AG04449 (cell line): ENCODE measurements at regions of chr1 and their contacts with region 1.

Region 1: DNA sequence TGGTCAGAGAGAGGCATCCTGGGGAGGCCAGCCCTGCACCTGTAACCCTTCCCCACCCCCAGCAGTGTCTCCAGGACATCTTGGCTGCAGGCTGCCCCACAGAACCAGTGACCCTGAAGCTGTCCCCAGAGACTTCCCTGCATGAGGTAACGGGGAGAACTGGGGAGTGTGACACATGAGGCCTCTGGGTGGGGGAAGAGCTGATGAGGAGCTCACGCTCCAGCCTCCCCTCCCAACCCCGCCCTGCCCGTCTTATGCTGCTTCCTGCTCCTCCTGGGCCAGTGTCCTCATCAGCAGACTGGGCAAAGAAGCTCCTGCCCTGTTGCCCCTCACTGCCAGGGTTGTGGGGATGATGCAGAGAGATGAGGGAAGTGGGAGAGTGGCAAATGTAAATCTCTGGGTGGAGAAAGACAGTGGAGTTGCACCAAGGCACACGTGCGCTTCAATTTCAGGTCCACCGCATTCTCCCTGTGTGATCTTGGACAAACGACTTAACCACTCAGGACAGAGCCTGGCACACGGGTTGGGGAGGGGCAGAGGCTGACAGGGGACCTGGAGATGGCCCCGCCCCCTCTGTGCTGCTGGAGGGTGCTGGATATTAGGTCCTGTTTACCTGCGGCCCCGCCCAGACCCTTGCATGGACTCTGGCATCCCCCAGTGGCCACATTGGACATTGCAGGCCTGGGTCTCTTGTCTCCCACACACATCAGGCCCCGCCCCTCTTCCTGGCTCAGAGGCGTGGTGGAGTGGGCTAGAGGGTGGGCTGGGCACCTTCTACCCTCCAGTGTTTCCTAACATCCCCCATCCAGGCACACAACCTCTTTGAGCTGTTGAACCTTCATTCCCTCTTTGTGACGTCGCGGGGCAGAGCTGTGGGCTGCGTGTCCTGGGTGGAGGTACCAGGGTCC is 12.3 kb downstream of the CLCNKB start:
- DNase-seq: no peak
- H3K4me3 ChIP-seq: no peak overlapping the region
- CTCF ChIP-seq: peak; percentile 94

Region 2: DNA sequence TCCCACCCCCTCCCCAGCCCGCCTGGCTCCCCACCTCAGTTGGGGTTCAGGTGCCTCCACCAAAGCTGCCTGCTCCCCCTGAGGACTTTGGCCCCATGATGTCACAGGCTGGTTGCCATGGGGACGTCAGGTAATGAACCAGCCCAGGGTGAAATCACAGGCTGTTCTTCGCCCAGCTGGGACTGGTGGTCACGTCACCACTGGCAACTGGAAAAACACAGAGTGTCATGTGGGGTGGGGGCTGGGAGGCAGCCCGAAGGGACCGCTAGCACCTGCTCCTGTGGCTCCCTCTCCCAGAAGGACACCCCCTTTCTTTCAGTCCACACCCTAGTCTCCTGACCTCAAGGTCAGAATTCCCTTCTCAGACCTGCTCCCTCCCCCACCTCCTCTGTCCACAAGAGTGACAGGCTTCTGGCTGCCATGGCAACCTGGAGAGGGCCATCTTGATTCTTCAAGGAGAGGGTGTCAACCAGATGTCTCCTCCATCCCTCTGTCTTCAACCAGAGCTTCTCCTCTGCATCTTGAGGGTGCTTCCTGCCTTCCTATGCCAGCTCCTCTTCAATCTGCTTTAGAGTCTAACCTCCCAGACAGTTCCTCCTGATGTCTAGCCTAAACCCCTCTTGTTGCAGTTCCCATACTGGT is 11.4 kb after region 1 on chr1:
- CTCF ChIA-PET with region 1: interaction called, 24 read pairs
- POLR2A ChIA-PET with region 1: no interaction called
- DNase-seq: no peak
- H3K4me3 ChIP-seq: no peak overlapping the region
- CTCF ChIP-seq: no peak